Psoas muscle (tissue), 8 donors: ENCODE measurements at regions of chr9 and their contacts with region 1.

Region 1: GRCh38 chr9:26744191-26744965 is 148.2 kb downstream of the CAAP1 start:
- DNase-seq: no peak
- ATAC-seq: no peak
- H3K4me3 ChIP-seq: no peak overlapping the region
- H3K27ac ChIP-seq: no peak overlapping the region
- H3K4me1 ChIP-seq: no peaks in the 10 kb centered on the region
- H3K27me3 ChIP-seq: no peaks in the 10 kb centered on the region
- CTCF ChIP-seq: peak; percentile 78

Region 2: DNA sequence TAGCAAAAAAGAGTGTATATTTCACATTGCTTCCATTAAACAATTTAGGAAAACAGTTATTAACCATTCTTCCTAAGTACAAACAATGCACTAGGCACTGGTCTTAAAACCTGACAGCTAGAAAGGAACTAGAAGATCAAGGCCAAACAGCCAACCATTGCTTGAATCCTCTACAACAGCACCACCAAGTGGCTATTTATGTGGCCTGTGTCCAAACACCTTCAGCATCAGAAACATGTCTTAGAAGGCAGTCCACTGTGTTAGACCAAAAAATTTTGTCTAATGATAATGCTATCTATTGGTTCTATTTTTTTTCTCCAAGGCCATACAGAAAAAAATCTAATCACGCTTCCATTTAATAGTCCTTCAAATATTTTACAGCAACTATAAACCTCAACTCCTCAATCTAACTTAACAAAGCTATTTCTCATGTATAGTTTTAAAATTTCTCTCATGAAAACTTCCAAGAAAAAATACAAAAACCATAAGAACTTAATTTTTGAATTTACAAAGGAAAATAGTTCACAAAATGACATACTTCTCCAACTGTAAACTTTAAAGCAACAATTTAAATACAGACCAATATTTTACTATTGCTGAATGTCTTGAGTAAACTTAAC is 112.1 kb after region 1 on chr9:
- intact Hi-C with region 1: loop called in 1 of 2 experiments (anchors 10 kb)
- DNase-seq: no peak
- ATAC-seq: no peak
- H3K4me3 ChIP-seq: no peak overlapping the region
- H3K27ac ChIP-seq: no peak overlapping the region
- H3K4me1 ChIP-seq: no peaks in the 10 kb centered on the region
- H3K27me3 ChIP-seq: no peaks in the 10 kb centered on the region
- CTCF ChIP-seq: peak; percentile 40

Region 3: DNA sequence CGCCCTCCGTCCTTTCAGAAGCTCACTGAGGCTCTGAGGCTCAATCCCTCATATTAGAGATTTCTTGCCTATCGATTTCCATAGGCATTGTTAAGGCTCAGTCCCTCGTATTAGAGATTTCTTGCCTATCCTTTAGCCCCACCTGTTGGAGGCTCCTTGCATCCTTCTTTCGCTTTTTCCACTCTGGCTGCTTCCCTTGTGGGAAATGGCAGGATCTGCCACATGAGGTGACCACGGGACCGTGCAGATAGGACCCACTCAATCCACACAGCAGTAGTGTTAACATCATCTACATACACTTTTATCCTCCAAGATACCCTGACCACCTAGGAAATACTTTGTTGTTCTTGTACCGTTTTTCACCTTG is 231.3 kb after region 1 on chr9:
- intact Hi-C with region 1: loop called (anchors 1 to 2 kb)
- DNase-seq: no peak
- ATAC-seq: peak in 3 of 4 donors; percentile 42 to 74 (median 54)
- H3K4me3 ChIP-seq: no peak overlapping the region
- H3K27ac ChIP-seq: no peak overlapping the region
- H3K4me1 ChIP-seq: no peaks in the 10 kb centered on the region
- H3K27me3 ChIP-seq: no peaks in the 10 kb centered on the region
- CTCF ChIP-seq: peak; percentile 56